ENCODE measurements at regions of chr17 and their contacts with region 1.

Region 1: GRCh38 chr17:7825206-7825990 is 8.6 kb upstream of the KDM6B start:
- DNase-seq: no peak
- H3K4me3 ChIP-seq: no peak overlapping the region
- H3K27ac ChIP-seq: no peak overlapping the region
- H3K4me1 ChIP-seq: no peaks in the 10 kb centered on the region
- CTCF ChIP-seq: peak; percentile 33; the same call in 1 of the 2 replicates

Region 2: DNA sequence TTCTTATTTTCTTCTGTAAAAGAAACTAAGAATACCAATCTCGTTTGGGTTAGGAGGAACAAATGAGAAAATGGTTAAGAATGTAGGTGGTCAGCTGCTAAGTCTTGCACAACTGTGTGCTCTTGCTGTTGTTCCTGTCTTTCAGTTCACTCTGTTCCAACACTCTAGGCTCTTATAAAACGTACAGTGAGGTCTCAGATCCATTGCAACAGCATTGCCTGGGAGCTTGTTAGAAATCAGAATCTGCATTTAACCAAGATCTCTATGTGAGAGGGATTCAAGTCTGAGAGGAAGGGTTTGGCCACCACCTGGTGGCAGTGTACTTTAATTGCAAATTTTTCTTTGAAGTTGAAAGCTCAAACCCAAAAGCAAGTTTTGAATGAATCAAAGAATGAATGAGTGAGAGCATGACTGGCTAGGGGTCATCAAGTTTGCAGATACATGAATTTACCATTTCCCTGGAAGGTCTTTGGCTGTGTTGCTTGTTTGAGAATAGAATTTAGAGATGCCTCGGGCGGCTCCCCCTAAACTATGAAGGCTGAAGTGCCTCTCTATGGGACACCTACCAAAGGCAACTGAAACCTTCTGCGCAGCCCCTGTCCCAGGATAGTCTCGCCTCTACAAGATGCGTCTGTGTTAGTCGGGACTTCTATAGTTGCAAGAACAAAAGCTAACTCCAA is 216.0 kb after region 1 on chr17:
- CTCF ChIA-PET with region 1: no interaction called
- POLR2A ChIA-PET with region 1: no interaction called
- intact Hi-C with region 1: loop called (anchors 10 kb)
- DNase-seq: peak; percentile 76
- H3K4me3 ChIP-seq: no peak overlapping the region
- H3K27ac ChIP-seq: no peak overlapping the region
- H3K4me1 ChIP-seq: no peaks in the 10 kb centered on the region
- CTCF ChIP-seq: peak; percentile 92

Measured in OCI-LY7 (cell line).